ENCODE measurements at regions of chr12 and their contacts with region 1.

Region 1: GRCh38 chr12:81759215-81760051 is at the start of gene PPFIA2:
- DNase-seq: peak in 1 of 2 donors; percentile 69
- H3K4me3 ChIP-seq: peak within 1 kb of the TSS; percentile 59 to 95
- H3K27ac ChIP-seq: peak within 1 kb of the TSS; percentile 10 to 53
- H3K4me1 ChIP-seq: peaks cover 0 to 4% of the 10 kb centered on the region in 2 donors
- H3K27me3 ChIP-seq: no peaks in the 10 kb centered on the region
- CTCF ChIP-seq: no peak
- total RNA-seq, gene PPFIA2: 15.0 TPM

Region 2: DNA sequence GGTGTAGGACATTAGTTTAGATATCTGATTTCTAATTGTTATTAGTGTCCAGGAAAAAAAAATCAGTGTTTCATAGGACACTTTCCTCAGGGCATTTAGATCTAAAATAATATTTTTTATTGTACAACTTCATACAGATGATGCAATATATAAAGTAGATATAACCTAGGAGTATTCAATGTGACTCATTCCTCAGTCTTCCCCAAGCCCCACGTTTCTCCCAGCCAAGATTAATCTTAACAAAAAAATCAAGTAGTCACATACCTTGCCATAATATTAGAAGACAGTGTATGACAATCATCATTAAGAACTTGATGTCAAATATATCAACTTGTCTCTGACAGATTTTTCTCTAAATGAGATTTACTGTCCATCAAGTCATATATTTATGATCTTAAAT is 37.4 kb before region 1 on chr12:
- intact Hi-C with region 1: loop called (anchors 1 kb)
- DNase-seq: no peak
- H3K4me3 ChIP-seq: no peak overlapping the region
- H3K27ac ChIP-seq: no peak overlapping the region
- H3K4me1 ChIP-seq: no peaks in the 10 kb centered on the region
- H3K27me3 ChIP-seq: no peaks in the 10 kb centered on the region
- CTCF ChIP-seq: no peak

Region 3: DNA sequence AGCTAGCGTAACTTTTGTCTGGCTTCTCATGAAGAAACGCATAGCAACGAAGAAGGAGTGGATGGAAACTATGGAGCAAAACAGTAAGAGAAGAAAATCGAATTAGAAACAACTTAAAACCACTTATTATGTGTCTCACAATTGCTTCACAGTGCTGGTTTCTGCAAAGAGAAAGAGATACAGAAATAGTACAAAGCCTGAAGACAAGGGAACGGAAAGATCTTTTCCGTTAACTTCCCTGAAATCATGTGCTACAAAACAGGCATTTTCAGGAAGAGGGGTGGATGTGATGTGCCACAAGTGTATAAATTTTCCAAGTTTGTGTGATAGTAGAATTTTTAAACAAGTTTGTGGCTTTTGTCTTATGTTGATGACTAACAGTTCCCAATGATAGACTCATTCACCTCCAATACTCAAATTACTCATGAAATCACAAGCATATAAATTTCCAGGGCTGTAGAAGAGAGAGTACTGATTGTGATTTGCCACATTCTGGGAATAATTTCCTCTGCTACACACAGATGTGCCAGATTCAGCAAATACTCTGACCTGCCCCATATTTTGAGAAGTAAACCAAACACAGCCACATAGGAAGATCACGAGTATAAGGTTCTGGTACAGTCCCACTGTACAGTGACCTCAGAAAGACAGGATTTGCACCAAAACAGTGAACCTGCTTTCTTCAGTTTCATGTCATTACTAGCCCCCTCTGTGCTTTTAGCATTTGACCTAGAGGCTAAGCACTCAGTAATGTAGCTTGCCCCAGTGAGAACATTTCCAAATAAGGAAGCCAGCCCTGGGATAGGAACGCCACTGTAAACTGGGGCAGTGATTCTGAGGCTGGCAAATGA is 41.1 kb after region 1 on chr12:
- intact Hi-C with region 1: loop called (anchors 2 kb)
- DNase-seq: peak in 1 of 2 donors; percentile 75
- H3K4me3 ChIP-seq: peak overlapping the region in 1 of 2 donors; percentile 53
- H3K27ac ChIP-seq: peak overlapping the region; percentile 82 to 93
- H3K4me1 ChIP-seq: peaks cover 3% of the 10 kb centered on the region in 2 donors
- H3K27me3 ChIP-seq: no peaks in the 10 kb centered on the region
- CTCF ChIP-seq: no peak

Region 4: DNA sequence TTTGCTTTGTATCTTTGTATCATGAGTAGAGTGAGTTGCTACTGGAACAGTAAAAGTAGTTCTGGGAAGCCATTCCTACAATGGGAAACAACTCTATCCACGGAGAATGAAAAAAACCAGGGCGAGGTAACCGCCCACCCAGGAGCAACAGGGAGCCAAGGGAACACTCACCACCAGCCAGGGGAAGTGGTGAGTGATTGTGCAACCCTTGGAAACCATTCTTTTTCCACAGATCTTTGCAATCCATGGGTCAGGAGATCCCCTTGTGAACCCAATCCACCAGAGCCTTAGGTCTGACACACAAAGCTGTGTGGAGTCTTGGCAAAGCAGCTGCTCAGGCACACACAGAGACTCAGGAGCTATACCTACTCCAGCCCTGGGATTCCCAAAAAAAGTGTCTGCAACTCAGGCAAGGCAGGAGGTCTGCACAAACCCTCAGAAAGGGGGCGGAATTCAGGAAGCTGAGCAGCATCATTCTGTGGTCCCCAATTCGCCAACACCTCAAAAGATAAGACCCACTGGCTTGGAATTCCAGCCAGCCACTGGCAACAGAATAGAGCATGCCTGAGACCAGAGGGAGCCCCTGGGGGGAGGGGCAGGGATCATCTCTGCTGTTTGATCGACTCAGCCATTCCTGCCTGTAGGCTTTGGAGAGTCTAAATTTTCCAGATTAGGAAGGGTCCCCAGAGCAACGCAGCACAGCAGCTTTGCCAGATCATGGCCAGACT is 51.8 kb after region 1 on chr12:
- intact Hi-C with region 1: no loop called
- DNase-seq: peak in 1 of 2 donors; percentile 69
- H3K4me3 ChIP-seq: no peak overlapping the region
- H3K27ac ChIP-seq: peak overlapping the region; percentile 47 to 68
- H3K4me1 ChIP-seq: peaks cover 7 to 17% of the 10 kb centered on the region in 2 donors
- H3K27me3 ChIP-seq: no peaks in the 10 kb centered on the region
- CTCF ChIP-seq: no peak

Region 5: GRCh38 chr12:82426081-82426480 is 666.6 kb after region 1 on chr12:
- intact Hi-C with region 1: no loop called
- DNase-seq: no peak
- H3K4me3 ChIP-seq: no peak overlapping the region
- H3K27ac ChIP-seq: no peak overlapping the region
- H3K4me1 ChIP-seq: no peaks in the 10 kb centered on the region
- H3K27me3 ChIP-seq: no peaks in the 10 kb centered on the region
- CTCF ChIP-seq: no peak

Measured in ascending aorta (tissue), 2 donors.